ENCODE measurements at regions of chr11 and their contacts with region 1.

Region 1: DNA sequence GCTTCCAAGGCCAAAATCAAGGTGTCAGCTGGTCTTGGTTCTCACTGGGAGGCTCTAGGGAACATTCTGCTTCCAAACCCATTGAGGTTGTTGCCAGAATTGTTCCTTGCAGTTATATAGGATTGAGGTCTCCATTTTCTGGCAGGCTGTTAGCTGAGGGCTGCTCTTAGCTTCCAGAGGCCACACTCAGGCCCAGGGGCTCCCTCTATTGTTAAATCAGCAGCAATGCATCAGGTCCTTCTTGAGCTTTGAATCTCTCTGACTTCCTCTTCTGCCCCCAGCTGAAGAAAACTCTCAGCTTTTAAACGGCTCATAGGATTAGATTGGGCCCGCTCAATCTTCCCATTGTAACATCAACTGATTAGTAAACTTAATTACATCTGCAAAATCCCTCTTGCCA is 39.3 kb upstream of the BSX start:
- DNase-seq: peak; percentile 53
- ATAC-seq: peak; percentile 74
- H3K4me3 Mint-ChIP-seq: no peak overlapping the region
- H3K27ac Mint-ChIP-seq: no peak overlapping the region
- H3K4me1 Mint-ChIP-seq: peaks cover 7% of the 10 kb centered on the region
- H3K27me3 Mint-ChIP-seq: peaks cover 16% of the 10 kb centered on the region

Region 2: GRCh38 chr11:122628810-122629555 is 392.0 kb before region 1 on chr11:
- CTCF ChIA-PET with region 1: interaction called, 10 read pairs
- POLR2A ChIA-PET with region 1: no interaction called
- DNase-seq: peak; percentile 81
- ATAC-seq: peak; percentile 86
- H3K4me3 Mint-ChIP-seq: no peak overlapping the region
- H3K27ac Mint-ChIP-seq: no peak overlapping the region
- H3K4me1 Mint-ChIP-seq: peaks cover 33% of the 10 kb centered on the region
- H3K27me3 Mint-ChIP-seq: peaks cover 2% of the 10 kb centered on the region

Region 3: DNA sequence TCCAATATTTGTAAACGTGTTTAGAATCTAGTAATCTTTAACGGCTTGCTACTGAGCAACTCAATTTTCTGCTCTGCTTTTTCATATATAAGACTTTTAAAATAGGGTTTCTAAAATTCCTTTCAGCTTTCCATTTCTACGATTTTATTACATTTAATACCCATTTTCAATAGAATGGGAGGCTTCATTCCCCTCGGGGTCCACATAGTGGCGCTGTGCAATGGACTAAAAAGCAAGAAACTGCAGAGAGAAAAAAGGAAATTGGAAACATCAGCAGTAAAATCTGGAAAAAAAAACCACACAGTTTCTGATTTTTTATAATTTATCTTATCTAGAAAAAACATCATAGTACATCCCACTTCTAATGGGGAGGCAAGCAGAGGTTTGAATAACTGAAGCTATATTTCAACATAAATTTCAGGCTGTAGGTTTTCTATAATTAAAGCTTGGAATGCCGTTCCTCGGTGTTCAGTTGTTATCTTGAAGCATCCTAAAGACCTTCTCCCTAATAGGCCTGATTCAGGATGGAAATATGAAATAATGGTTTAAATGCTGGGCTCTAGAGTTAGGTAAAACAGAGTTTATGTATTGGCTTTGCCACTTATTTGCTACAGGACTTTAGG is 157.2 kb before region 1 on chr11:
- CTCF ChIA-PET with region 1: interaction called, 152 read pairs
- POLR2A ChIA-PET with region 1: no interaction called
- DNase-seq: peak; percentile 51
- ATAC-seq: no peak
- H3K4me3 Mint-ChIP-seq: no peak overlapping the region
- H3K27ac Mint-ChIP-seq: no peak overlapping the region
- H3K4me1 Mint-ChIP-seq: no peaks in the 10 kb centered on the region
- H3K27me3 Mint-ChIP-seq: no peaks in the 10 kb centered on the region

Region 4: GRCh38 chr11:123033895-123034294 is 12.9 kb after region 1 on chr11:
- CTCF ChIA-PET with region 1: interaction called, 12 read pairs
- POLR2A ChIA-PET with region 1: interaction called, 3 read pairs
- DNase-seq: no peak
- ATAC-seq: no peak
- H3K4me3 Mint-ChIP-seq: no peak overlapping the region
- H3K27ac Mint-ChIP-seq: no peak overlapping the region
- H3K4me1 Mint-ChIP-seq: peaks cover 7% of the 10 kb centered on the region
- H3K27me3 Mint-ChIP-seq: peaks cover 5% of the 10 kb centered on the region

Region 5: DNA sequence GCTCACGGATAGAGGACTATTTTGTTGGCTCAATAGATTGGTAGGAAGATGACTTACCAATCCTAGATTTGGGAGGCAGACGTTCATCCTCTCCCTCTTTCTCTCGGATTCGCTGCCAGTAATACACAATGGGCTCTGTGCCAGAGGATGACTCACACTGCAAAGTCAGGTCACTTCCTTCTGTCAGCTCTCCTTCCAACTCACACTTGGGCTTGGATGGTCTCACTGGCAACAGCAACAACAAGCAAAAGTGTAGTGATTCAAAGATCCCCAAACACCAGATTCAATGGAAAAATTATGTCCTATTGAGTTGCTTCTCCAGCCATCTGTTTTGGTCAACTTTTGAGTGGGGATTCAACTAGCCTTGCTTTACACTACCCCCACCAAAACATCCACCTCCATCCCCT is 62.7 kb after region 1 on chr11:
- CTCF ChIA-PET with region 1: no interaction called
- POLR2A ChIA-PET with region 1: no interaction called
- DNase-seq: peak; percentile 54
- ATAC-seq: peak; percentile 32
- H3K4me3 Mint-ChIP-seq: no peak overlapping the region
- H3K27ac Mint-ChIP-seq: no peak overlapping the region
- H3K4me1 Mint-ChIP-seq: peaks cover 50% of the 10 kb centered on the region
- H3K27me3 Mint-ChIP-seq: no peaks in the 10 kb centered on the region